Posterior vena cava (tissue), 2 donors: ENCODE measurements at regions of chr7 and their contacts with region 1.

Region 1: GRCh38 chr7:142711746-142712619 is 37.3 kb upstream of the PRSS1 start:
- DNase-seq: no peak

Region 2: GRCh38 chr7:142771353-142771723 is 59.4 kb after region 1 on chr7:
- intact Hi-C with region 1: loop called in 1 of 2 experiments (anchors 10 kb)
- DNase-seq: no peak